OCI-LY7 (cell line): ENCODE measurements at regions of chr1 and their contacts with region 1.

Region 1: GRCh38 chr1:85612704-85613361 is 32.3 kb downstream of the CCN1 start:
- DNase-seq: no peak
- H3K4me3 ChIP-seq: no peak overlapping the region
- H3K27ac ChIP-seq: no peak overlapping the region
- H3K4me1 ChIP-seq: no peaks in the 10 kb centered on the region
- CTCF ChIP-seq: 0 out of 2 replicates have a peak, but pooled peaks have one; percentile 25

Region 2: DNA sequence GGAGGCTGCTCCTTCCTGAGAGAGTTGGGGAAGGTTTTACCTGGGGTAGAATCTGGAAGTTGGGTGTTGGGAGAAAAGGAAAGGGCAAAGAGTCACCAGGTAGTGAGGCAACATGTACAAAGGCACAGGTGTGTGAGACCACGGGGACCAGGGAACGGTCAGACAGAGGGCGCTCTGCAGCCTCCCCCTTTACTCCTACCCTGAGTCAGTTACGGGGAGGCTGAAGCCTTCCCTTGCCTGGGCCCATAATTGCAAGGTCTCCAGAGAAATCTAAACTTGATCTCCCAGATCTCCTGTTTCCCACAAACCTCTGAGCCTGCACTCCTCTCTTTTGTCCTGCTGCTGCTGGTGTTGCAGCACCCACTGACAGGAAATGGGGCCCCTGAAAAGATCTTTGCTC is 10.3 kb before region 1 on chr1:
- CTCF ChIA-PET with region 1: no interaction called
- POLR2A ChIA-PET with region 1: no interaction called
- intact Hi-C with region 1: loop called (anchors 1 kb)
- DNase-seq: no peak
- H3K4me3 ChIP-seq: no peak overlapping the region
- H3K27ac ChIP-seq: no peak overlapping the region
- H3K4me1 ChIP-seq: no peaks in the 10 kb centered on the region
- CTCF ChIP-seq: no peak